CD4-positive, alpha-beta memory T cell (primary cell): ENCODE measurements at regions of chr1 and their contacts with region 1.

Region 1: GRCh38 chr1:222455188-222455879 is 92.6 kb downstream of the HHIPL2 start:
- DNase-seq: peak; percentile 76 to 81 (median 80)
- H3K4me3 ChIP-seq: no peak overlapping the region
- H3K4me3 Mint-ChIP-seq: peak overlapping the region in 7 of 8 donors; percentile 5 to 69 (median 46)
- H3K27ac ChIP-seq: no peak overlapping the region
- H3K27ac Mint-ChIP-seq: peak overlapping the region in 5 of 7 donors; percentile 2 to 87 (median 24)
- H3K4me1 ChIP-seq: peaks cover 7% of the 10 kb centered on the region
- H3K4me1 Mint-ChIP-seq: peaks cover 7 to 21% (median 18%) of the 10 kb centered on the region in 4 donors
- H3K27me3 ChIP-seq: no peaks in the 10 kb centered on the region
- H3K27me3 Mint-ChIP-seq: peaks cover 0 to 1% of the 10 kb centered on the region in 2 donors

Region 2: GRCh38 chr1:220810179-220810653 is 1645.1 kb before region 1 on chr1:
- CTCF ChIA-PET with region 1: no interaction called
- POLR2A ChIA-PET with region 1: no interaction called
- intact Hi-C with region 1: loop called (anchors 10 kb)
- DNase-seq: peak; percentile 55 to 66 (median 59)
- H3K4me3 ChIP-seq: no peak overlapping the region
- H3K4me3 Mint-ChIP-seq: peak overlapping the region in 7 of 8 donors; percentile 50 to 69 (median 55)
- H3K27ac ChIP-seq: no peak overlapping the region
- H3K27ac Mint-ChIP-seq: peak overlapping the region in 1 of 7 donors; percentile 66
- H3K4me1 ChIP-seq: no peaks in the 10 kb centered on the region
- H3K4me1 Mint-ChIP-seq: peaks cover 1 to 8% (median 4%) of the 10 kb centered on the region in 4 donors
- H3K27me3 ChIP-seq: no peaks in the 10 kb centered on the region
- H3K27me3 Mint-ChIP-seq: peaks cover 16 to 24% of the 10 kb centered on the region in 2 donors

Region 3: DNA sequence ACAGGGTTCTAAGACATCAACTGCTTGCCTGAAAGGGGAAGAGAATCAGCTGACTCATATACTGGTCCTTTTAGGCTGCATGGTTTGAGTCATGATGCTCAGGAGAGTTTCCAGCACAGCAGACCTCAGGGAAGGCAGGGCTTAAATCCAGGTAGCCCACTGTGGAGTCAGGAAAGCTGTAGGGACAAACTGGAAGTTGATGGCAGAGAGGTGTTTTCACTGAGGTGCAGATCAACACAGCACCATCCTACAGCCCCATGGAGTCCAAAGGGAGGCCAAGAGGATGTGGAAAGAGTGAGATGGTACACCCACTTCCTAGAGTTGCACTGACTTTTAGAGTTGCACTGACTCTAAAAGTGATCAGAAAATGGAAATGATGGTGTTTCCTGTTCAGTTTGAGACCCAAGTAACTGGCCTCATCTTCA is 461.0 kb before region 1 on chr1:
- CTCF ChIA-PET with region 1: no interaction called
- POLR2A ChIA-PET with region 1: no interaction called
- intact Hi-C with region 1: loop called (anchors 5 kb)
- DNase-seq: no peak
- H3K4me3 ChIP-seq: no peak overlapping the region
- H3K4me3 Mint-ChIP-seq: no peak overlapping the region
- H3K27ac ChIP-seq: no peak overlapping the region
- H3K27ac Mint-ChIP-seq: no peak overlapping the region
- H3K4me1 ChIP-seq: no peaks in the 10 kb centered on the region
- H3K4me1 Mint-ChIP-seq: peaks cover 0 to 28% (median 9%) of the 10 kb centered on the region in 4 donors
- H3K27me3 ChIP-seq: no peaks in the 10 kb centered on the region
- H3K27me3 Mint-ChIP-seq: no peaks in the 10 kb centered on the region

Region 4: GRCh38 chr1:222124602-222125001 is 330.7 kb before region 1 on chr1:
- CTCF ChIA-PET with region 1: interaction called, 46 read pairs
- POLR2A ChIA-PET with region 1: no interaction called
- intact Hi-C with region 1: loop called (anchors 1 kb)
- DNase-seq: no peak
- H3K4me3 ChIP-seq: no peak overlapping the region
- H3K4me3 Mint-ChIP-seq: no peak overlapping the region
- H3K27ac ChIP-seq: no peak overlapping the region
- H3K27ac Mint-ChIP-seq: no peak overlapping the region
- H3K4me1 ChIP-seq: no peaks in the 10 kb centered on the region
- H3K4me1 Mint-ChIP-seq: peaks cover 0 to 6% (median under 1%) of the 10 kb centered on the region in 4 donors
- H3K27me3 ChIP-seq: no peaks in the 10 kb centered on the region
- H3K27me3 Mint-ChIP-seq: peaks cover 0 to 7% of the 10 kb centered on the region in 2 donors

Region 5: DNA sequence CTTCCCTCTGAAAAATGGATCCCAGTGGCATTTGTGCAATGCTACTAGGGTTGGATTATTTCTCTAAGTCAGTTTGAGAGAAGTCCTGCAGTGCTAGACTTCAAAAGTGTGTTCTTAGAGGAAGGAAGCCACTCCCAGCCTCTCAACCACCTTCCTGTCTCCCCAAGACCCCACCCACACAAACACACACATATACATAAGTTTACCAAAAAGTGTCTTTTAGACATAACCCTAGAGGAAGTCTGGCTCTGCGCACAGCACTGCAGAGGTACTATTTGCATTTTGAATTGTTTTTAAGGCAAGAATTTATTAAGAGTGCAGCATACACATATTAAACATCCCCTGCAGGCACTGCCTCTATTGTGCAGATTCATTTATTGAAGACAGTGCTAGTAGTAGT is 34.7 kb before region 1 on chr1:
- CTCF ChIA-PET with region 1: interaction called, 29 read pairs
- POLR2A ChIA-PET with region 1: interaction called, 23 read pairs
- intact Hi-C with region 1: loop called (anchors 1 kb)
- DNase-seq: peak; percentile 51 to 74 (median 70)
- H3K4me3 ChIP-seq: peak overlapping the region in 1 of 2 donors; percentile 22
- H3K4me3 Mint-ChIP-seq: peak overlapping the region; percentile 27 to 85 (median 73)
- H3K27ac ChIP-seq: peak overlapping the region; percentile 19
- H3K27ac Mint-ChIP-seq: peak overlapping the region; percentile 74 to 97 (median 94)
- H3K4me1 ChIP-seq: peaks cover 68% of the 10 kb centered on the region
- H3K4me1 Mint-ChIP-seq: peaks cover 62 to 85% (median 73%) of the 10 kb centered on the region in 4 donors
- H3K27me3 ChIP-seq: no peaks in the 10 kb centered on the region
- H3K27me3 Mint-ChIP-seq: no peaks in the 10 kb centered on the region

Region 6: DNA sequence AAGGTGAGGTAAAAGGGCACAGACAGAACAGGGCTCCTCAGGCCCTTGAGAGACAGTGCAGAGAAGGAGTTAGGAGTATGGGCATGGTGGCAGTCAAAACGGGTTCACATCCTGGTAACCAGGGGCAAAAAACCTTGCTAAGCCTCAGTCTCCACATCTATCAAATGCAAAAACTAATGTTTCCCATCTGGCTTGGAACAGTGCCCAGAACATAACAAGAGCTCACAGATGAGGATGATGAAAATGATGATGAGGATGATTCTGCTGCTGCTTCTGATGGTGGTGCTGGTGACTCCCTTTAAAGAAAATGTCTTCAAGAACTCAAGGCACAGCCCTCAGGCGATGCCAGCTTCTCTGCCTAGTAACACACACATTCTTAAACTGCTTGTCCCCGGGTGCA is 68.5 kb after region 1 on chr1:
- CTCF ChIA-PET with region 1: no interaction called
- POLR2A ChIA-PET with region 1: no interaction called
- intact Hi-C with region 1: no loop called
- DNase-seq: no peak
- H3K4me3 ChIP-seq: no peak overlapping the region
- H3K4me3 Mint-ChIP-seq: no peak overlapping the region
- H3K27ac ChIP-seq: no peak overlapping the region
- H3K27ac Mint-ChIP-seq: no peak overlapping the region
- H3K4me1 ChIP-seq: no peaks in the 10 kb centered on the region
- H3K4me1 Mint-ChIP-seq: no peaks in the 10 kb centered on the region
- H3K27me3 ChIP-seq: no peaks in the 10 kb centered on the region
- H3K27me3 Mint-ChIP-seq: peaks cover 15% of the 10 kb centered on the region in 2 donors

Region 7: GRCh38 chr1:222634180-222635013 is 179.1 kb after region 1 on chr1:
- CTCF ChIA-PET with region 1: interaction called, 99 read pairs
- POLR2A ChIA-PET with region 1: no interaction called
- intact Hi-C with region 1: no loop called
- DNase-seq: peak; percentile 75 to 79 (median 78)
- H3K4me3 ChIP-seq: no peak overlapping the region
- H3K4me3 Mint-ChIP-seq: no peak overlapping the region
- H3K27ac ChIP-seq: no peak overlapping the region
- H3K27ac Mint-ChIP-seq: peak overlapping the region in 5 of 7 donors; percentile 8 to 76 (median 54)
- H3K4me1 ChIP-seq: no peaks in the 10 kb centered on the region
- H3K4me1 Mint-ChIP-seq: peaks cover 4 to 13% (median 5%) of the 10 kb centered on the region in 4 donors
- H3K27me3 ChIP-seq: no peaks in the 10 kb centered on the region
- H3K27me3 Mint-ChIP-seq: no peaks in the 10 kb centered on the region